SK-N-SH (cell line): ENCODE measurements at regions of chr6 and their contacts with region 1.

Region 1: GRCh38 chr6:53309059-53309900 is 39.5 kb downstream of the ELOVL5 start:
- DNase-seq: peak; percentile 50
- H3K4me3 ChIP-seq: no peak overlapping the region
- H3K27ac ChIP-seq: peak overlapping the region in 1 of 2 experiments; percentile 75; a peak in 2 of 4 replicates
- H3K4me1 ChIP-seq: peaks cover 29 to 34% of the 10 kb centered on the region in 2 experiments
- H3K27me3 ChIP-seq: no peaks in the 10 kb centered on the region
- CTCF ChIP-seq: no peak
- EP300 ChIP-seq: peak in 1 of 2 experiments; percentile 31; a peak in 1 of 4 replicates
- RAD21 ChIP-seq: no peak

Region 2: GRCh38 chr6:53294095-53294494 is 15.2 kb before region 1 on chr6:
- CTCF ChIA-PET with region 1: interaction called, 22 read pairs
- POLR2A ChIA-PET with region 1: no interaction called
- DNase-seq: peak; percentile 60
- H3K4me3 ChIP-seq: no peak overlapping the region
- H3K27ac ChIP-seq: no peak overlapping the region
- H3K4me1 ChIP-seq: peaks cover 9 to 15% of the 10 kb centered on the region in 2 experiments
- H3K27me3 ChIP-seq: no peaks in the 10 kb centered on the region
- CTCF ChIP-seq: peak; percentile 74
- EP300 ChIP-seq: no peak
- RAD21 ChIP-seq: peak; percentile 63